Activated B cell treated with CpG ODN at 0.5 μM for 24 hours (primary cell): ENCODE measurements at regions of chr12 and their contacts with region 1.

Region 1: DNA sequence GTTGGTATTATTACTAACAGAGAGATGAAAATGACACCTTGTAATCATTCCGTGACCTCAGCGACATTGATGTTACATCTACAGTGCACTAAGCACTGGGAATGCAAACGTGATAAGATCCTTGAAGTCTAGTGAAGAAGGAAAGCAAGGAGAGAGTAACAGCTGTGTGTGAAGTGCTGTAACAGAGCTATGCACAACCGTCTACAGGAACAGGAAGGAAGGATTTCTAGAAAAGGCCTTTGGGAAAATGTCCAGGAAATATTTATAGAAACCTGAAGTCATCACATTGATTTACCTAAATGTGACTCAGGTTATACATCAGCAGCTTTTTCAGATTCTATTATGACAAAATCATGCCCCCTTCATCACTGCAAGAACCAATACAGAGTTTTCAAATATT is 304.2 kb upstream of the AMIGO2 start:
- DNase-seq: no peak
- ATAC-seq: peak; percentile 18
- H3K4me3 Mint-ChIP-seq: peak overlapping the region; percentile 21
- H3K27ac Mint-ChIP-seq: peak overlapping the region; percentile 78
- H3K4me1 Mint-ChIP-seq: peaks cover 64% of the 10 kb centered on the region
- H3K27me3 Mint-ChIP-seq: no peaks in the 10 kb centered on the region
- CTCF ChIP-seq: no peak

Region 2: GRCh38 chr12:47361389-47362021 is 22.4 kb before region 1 on chr12:
- CTCF ChIA-PET with region 1: interaction called, 4 read pairs
- POLR2A ChIA-PET with region 1: interaction called, 16 read pairs
- intact Hi-C with region 1: loop called (anchors 2 kb)
- DNase-seq: no peak
- ATAC-seq: peak; percentile 68
- H3K4me3 Mint-ChIP-seq: peak overlapping the region; percentile 74
- H3K27ac Mint-ChIP-seq: peak overlapping the region; percentile 94
- H3K4me1 Mint-ChIP-seq: peaks cover 63% of the 10 kb centered on the region
- H3K27me3 Mint-ChIP-seq: no peaks in the 10 kb centered on the region
- CTCF ChIP-seq: no peak

Region 3: GRCh38 chr12:47370420-47370819 is 13.5 kb before region 1 on chr12:
- CTCF ChIA-PET with region 1: interaction called, 4 read pairs
- POLR2A ChIA-PET with region 1: interaction called, 5 read pairs
- intact Hi-C with region 1: loop called (anchors 1 kb)
- DNase-seq: no peak
- ATAC-seq: no peak
- H3K4me3 Mint-ChIP-seq: no peak overlapping the region
- H3K27ac Mint-ChIP-seq: no peak overlapping the region
- H3K4me1 Mint-ChIP-seq: peaks cover 3% of the 10 kb centered on the region
- H3K27me3 Mint-ChIP-seq: no peaks in the 10 kb centered on the region
- CTCF ChIP-seq: no peak